CD4-positive, alpha-beta T cell (primary cell): ENCODE measurements at regions of chr6 and their contacts with region 1.

Region 1: GRCh38 chr6:127266178-127266891 is at the start of gene RNF146:
- DNase-seq: peak; percentile 35 to 87 (median 66)
- ATAC-seq: peak; percentile 74
- H3K4me3 ChIP-seq: peak within 1 kb of the TSS; percentile 79
- H3K4me3 Mint-ChIP-seq: peak within 1 kb of the TSS; percentile 100
- H3K27ac ChIP-seq: peak within 1 kb of the TSS; percentile 87 to 89
- H3K27ac Mint-ChIP-seq: peak within 1 kb of the TSS; percentile 96
- H3K4me1 ChIP-seq: no peaks in the 10 kb centered on the region
- H3K4me1 Mint-ChIP-seq: peaks cover 50% of the 10 kb centered on the region
- H3K27me3 ChIP-seq: no peaks in the 10 kb centered on the region
- H3K27me3 Mint-ChIP-seq: no peaks in the 10 kb centered on the region
- CTCF ChIP-seq: peak; percentile 71
- total RNA-seq, gene RNF146: 12.5 to 14.1 TPM

Region 2: GRCh38 chr6:125779924-125780539 is 1486.3 kb before region 1 on chr6:
- CTCF ChIA-PET with region 1: no interaction called
- POLR2A ChIA-PET with region 1: interaction called, 3 read pairs
- intact Hi-C with region 1: loop called in 1 of 2 experiments (anchors 10 kb)
- DNase-seq: peak; percentile 72 to 96 (median 82)
- ATAC-seq: peak; percentile 76
- H3K4me3 ChIP-seq: peak overlapping the region; percentile 76
- H3K4me3 Mint-ChIP-seq: no peak overlapping the region
- H3K27ac ChIP-seq: peak overlapping the region; percentile 88 to 93
- H3K27ac Mint-ChIP-seq: no peak overlapping the region
- H3K4me1 ChIP-seq: peaks cover 3% of the 10 kb centered on the region
- H3K4me1 Mint-ChIP-seq: peaks cover 13% of the 10 kb centered on the region
- H3K27me3 ChIP-seq: no peaks in the 10 kb centered on the region
- H3K27me3 Mint-ChIP-seq: no peaks in the 10 kb centered on the region
- CTCF ChIP-seq: no peak

Region 3: DNA sequence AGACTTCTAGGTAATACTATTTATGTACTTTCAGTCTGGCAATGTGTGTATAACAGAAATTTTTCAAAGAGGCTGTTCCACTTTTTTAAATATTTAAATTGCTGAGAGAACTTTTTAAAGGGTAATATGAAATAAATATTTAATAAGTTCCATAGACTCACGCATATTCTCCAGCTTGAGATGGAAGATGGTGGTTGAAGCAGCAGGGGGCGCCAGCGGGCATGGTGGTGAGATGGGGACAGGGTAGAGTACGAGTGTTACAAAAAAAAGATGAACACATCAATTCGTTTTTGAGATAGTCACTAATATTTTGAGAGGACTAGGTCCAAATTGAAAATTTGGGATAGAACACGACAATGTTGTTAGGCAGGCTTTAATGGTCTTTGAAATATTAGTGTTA is 79.4 kb before region 1 on chr6:
- CTCF ChIA-PET with region 1: interaction called, 4 read pairs
- POLR2A ChIA-PET with region 1: interaction called, 3 read pairs
- intact Hi-C with region 1: loop called in 1 of 2 experiments (anchors 5 kb)
- DNase-seq: peak; percentile 14 to 55 (median 36)
- ATAC-seq: no peak
- H3K4me3 ChIP-seq: no peak overlapping the region
- H3K4me3 Mint-ChIP-seq: no peak overlapping the region
- H3K27ac ChIP-seq: no peak overlapping the region
- H3K27ac Mint-ChIP-seq: no peak overlapping the region
- H3K4me1 ChIP-seq: no peaks in the 10 kb centered on the region
- H3K4me1 Mint-ChIP-seq: no peaks in the 10 kb centered on the region
- H3K27me3 ChIP-seq: no peaks in the 10 kb centered on the region
- H3K27me3 Mint-ChIP-seq: peaks cover 6% of the 10 kb centered on the region
- CTCF ChIP-seq: peak; percentile 49

Region 4: GRCh38 chr6:127277878-127278843 is 11.8 kb after region 1 on chr6:
- CTCF ChIA-PET with region 1: interaction called, 7 read pairs
- POLR2A ChIA-PET with region 1: interaction called, 16 read pairs
- intact Hi-C with region 1: no loop called
- DNase-seq: no peak
- ATAC-seq: no peak
- H3K4me3 ChIP-seq: no peak overlapping the region
- H3K4me3 Mint-ChIP-seq: no peak overlapping the region
- H3K27ac ChIP-seq: no peak overlapping the region
- H3K27ac Mint-ChIP-seq: no peak overlapping the region
- H3K4me1 ChIP-seq: no peaks in the 10 kb centered on the region
- H3K4me1 Mint-ChIP-seq: peaks cover 24% of the 10 kb centered on the region
- H3K27me3 ChIP-seq: no peaks in the 10 kb centered on the region
- H3K27me3 Mint-ChIP-seq: no peaks in the 10 kb centered on the region
- CTCF ChIP-seq: no peak

Region 5: GRCh38 chr6:127342946-127343808 is 76.8 kb after region 1 on chr6 and contains the start of gene ECHDC1:
- CTCF ChIA-PET with region 1: interaction called, 5 read pairs
- POLR2A ChIA-PET with region 1: interaction called, 16 read pairs
- intact Hi-C with region 1: loop called in 1 of 2 experiments (anchors 5 kb)
- DNase-seq: peak; percentile 44 to 82 (median 60)
- ATAC-seq: peak; percentile 83
- H3K4me3 ChIP-seq: peak within 1 kb of the TSS; percentile 91
- H3K4me3 Mint-ChIP-seq: no peak within 1 kb of the TSS
- H3K27ac ChIP-seq: peak within 1 kb of the TSS; percentile 72
- H3K27ac Mint-ChIP-seq: no peak within 1 kb of the TSS
- H3K4me1 ChIP-seq: peaks cover 28% of the 10 kb centered on the region
- H3K4me1 Mint-ChIP-seq: peaks cover 8% of the 10 kb centered on the region
- H3K27me3 ChIP-seq: no peaks in the 10 kb centered on the region
- H3K27me3 Mint-ChIP-seq: no peaks in the 10 kb centered on the region
- CTCF ChIP-seq: no peak
- total RNA-seq, gene ECHDC1: 6.5 to 7.4 TPM

Region 6: GRCh38 chr6:127403636-127404035 is 137.3 kb after region 1 on chr6:
- CTCF ChIA-PET with region 1: no interaction called
- POLR2A ChIA-PET with region 1: no interaction called
- intact Hi-C with region 1: no loop called
- DNase-seq: no peak
- ATAC-seq: no peak
- H3K4me3 ChIP-seq: no peak overlapping the region
- H3K4me3 Mint-ChIP-seq: no peak overlapping the region
- H3K27ac ChIP-seq: no peak overlapping the region
- H3K27ac Mint-ChIP-seq: no peak overlapping the region
- H3K4me1 ChIP-seq: no peaks in the 10 kb centered on the region
- H3K4me1 Mint-ChIP-seq: no peaks in the 10 kb centered on the region
- H3K27me3 ChIP-seq: no peaks in the 10 kb centered on the region
- H3K27me3 Mint-ChIP-seq: no peaks in the 10 kb centered on the region
- CTCF ChIP-seq: no peak

Region 7: GRCh38 chr6:128520436-128521281 is 1254.3 kb after region 1 on chr6 and contains the start of gene PTPRK:
- CTCF ChIA-PET with region 1: no interaction called
- POLR2A ChIA-PET with region 1: interaction called, 3 read pairs
- intact Hi-C with region 1: loop called in 1 of 2 experiments (anchors 10 kb)
- DNase-seq: peak; percentile 72 to 92 (median 86)
- ATAC-seq: peak; percentile 84
- H3K4me3 ChIP-seq: peak within 1 kb of the TSS; percentile 80
- H3K4me3 Mint-ChIP-seq: peak within 1 kb of the TSS; percentile 98
- H3K27ac ChIP-seq: no peak within 1 kb of the TSS
- H3K27ac Mint-ChIP-seq: peak within 1 kb of the TSS; percentile 88
- H3K4me1 ChIP-seq: peaks cover 26% of the 10 kb centered on the region
- H3K4me1 Mint-ChIP-seq: peaks cover 19% of the 10 kb centered on the region
- H3K27me3 ChIP-seq: peaks cover 32 to 63% of the 10 kb centered on the region in 2 experiments
- H3K27me3 Mint-ChIP-seq: peaks cover 86% of the 10 kb centered on the region
- CTCF ChIP-seq: no peak
- total RNA-seq, gene PTPRK: 8.4 to 10.3 TPM